PC-3 (cell line): ENCODE measurements at regions of chr14 and their contacts with region 1.

Region 1: DNA sequence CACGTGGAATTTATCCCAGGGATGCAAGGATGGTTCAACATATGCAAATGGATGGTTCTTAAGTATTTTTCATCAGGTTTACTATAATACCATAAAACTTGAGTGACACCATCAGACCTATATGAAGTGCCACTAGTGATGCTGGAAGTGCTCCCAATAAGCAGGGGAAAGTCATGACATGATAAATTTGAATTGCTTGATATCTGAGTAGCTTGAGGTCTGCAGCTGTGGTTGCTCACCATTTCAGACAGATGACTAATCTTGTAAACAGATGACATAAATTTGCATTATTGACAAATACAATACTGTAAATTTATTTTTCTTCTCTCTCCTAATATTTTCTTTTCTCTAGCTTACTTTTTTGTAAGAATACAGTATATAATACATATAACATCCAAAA is 13.7 kb upstream of the PRPF39 start:
- DNase-seq: peak; percentile 65
- ATAC-seq: peak; percentile 99
- H3K4me3 ChIP-seq: no peak overlapping the region
- H3K27ac ChIP-seq: no peak overlapping the region
- H3K4me1 ChIP-seq: no peaks in the 10 kb centered on the region
- H3K27me3 ChIP-seq: no peaks in the 10 kb centered on the region
- CTCF ChIP-seq: no peak

Region 2: DNA sequence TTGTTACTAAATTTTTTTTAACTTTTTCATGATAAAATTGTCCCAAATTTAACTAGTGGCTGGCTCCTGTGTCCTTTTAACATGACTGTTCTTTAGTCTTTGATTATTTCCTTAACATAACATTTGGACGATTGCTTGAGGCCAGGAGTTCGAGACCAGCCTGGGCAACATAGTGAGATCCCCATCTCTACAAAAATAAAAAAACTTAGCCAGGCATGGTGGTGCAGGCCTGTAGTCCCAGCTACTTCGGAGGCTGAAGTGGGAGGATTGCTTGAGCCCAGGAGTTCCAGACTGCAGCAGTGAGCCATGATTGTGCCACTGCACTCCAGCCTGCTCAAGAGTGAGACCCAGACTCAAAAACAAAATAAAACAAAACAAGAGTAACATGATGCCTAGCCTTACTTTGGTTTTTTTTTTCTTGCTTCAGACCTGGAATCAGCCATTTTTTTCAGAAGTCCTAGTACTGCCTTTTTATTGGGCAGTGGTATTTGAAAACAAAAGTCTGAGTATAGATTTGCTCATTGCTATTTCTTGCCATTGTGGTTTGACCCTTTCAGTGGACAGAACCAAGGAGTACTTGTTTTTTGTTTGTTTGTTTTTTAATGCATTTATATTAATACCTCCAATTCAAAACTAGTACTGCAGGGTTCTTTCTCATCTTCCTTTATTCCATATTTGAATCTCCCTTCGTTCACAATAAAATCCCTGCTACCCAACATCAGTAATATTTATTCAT is 103.4 kb before region 1 on chr14:
- CTCF ChIA-PET with region 1: no interaction called
- POLR2A ChIA-PET with region 1: no interaction called
- intact Hi-C with region 1: no loop called
- DNase-seq: peak; percentile 34
- ATAC-seq: no peak
- H3K4me3 ChIP-seq: peak overlapping the region; percentile 61
- H3K27ac ChIP-seq: no peak overlapping the region
- H3K4me1 ChIP-seq: peaks cover 23% of the 10 kb centered on the region; the same call in 1 of the 2 replicates
- H3K27me3 ChIP-seq: no peaks in the 10 kb centered on the region
- CTCF ChIP-seq: no peak

Region 3: GRCh38 chr14:45089813-45090212 is 19.6 kb after region 1 on chr14:
- CTCF ChIA-PET with region 1: no interaction called
- POLR2A ChIA-PET with region 1: no interaction called
- intact Hi-C with region 1: no loop called
- DNase-seq: peak; percentile 39
- ATAC-seq: peak; percentile 68
- H3K4me3 ChIP-seq: no peak overlapping the region
- H3K27ac ChIP-seq: no peak overlapping the region
- H3K4me1 ChIP-seq: peaks cover 49% of the 10 kb centered on the region
- H3K27me3 ChIP-seq: no peaks in the 10 kb centered on the region
- CTCF ChIP-seq: no peak

Region 4: DNA sequence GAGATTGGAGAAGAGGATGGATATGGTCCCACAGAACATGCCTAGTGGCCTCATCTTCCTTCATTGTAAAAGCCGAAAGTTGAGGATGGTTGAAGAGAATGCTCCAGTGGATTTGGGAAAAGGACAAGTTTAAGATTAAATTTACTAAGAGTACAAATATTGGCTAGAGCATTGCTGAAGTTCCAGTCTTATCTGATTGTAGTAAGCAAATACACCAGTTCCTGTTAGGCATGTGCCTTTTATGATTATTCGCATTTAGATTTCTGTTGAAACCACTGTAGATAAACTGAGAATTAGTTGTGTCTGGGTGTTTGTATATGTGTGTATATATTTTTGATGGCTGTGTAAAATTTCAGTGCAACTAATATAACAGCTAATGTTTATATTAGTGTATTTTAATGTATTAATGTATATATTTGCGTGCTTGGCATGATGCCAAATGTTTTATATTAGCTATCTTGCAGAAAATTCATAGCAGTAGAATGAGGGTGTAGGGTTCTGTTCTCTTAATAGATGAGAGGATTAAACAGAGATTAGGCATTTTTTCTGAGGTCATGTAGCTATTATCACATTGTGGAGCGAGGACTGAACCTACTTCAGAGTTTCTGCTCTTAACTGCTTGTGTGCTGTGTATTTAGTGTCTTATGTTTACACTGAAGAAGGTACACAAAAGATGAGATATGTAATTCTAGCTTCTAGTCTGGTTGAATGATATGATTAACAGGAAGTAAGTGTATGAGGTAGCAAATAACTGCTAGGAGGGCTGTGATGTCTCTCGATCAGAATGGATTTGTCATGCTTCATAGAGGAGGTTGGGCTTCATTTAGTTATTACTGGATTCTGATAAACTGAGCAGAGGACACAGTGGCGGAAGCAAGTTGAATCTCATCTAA is 42.9 kb after region 1 on chr14:
- CTCF ChIA-PET with region 1: no interaction called
- POLR2A ChIA-PET with region 1: interaction called, 13 read pairs
- intact Hi-C with region 1: loop called (anchors 1 kb)
- DNase-seq: peak; percentile 88
- ATAC-seq: peak; percentile 95
- H3K4me3 ChIP-seq: peak overlapping the region; percentile 6; the same call in 1 of the 2 replicates
- H3K27ac ChIP-seq: peak overlapping the region; percentile 49
- H3K4me1 ChIP-seq: peaks cover 24% of the 10 kb centered on the region
- H3K27me3 ChIP-seq: no peaks in the 10 kb centered on the region
- CTCF ChIP-seq: no peak